Activated CD4-positive, alpha-beta T cell treated with anti-CD3 and anti-CD28 coated beads, Interleukin-2, amount 10 ng/mL, durations not matched to agents 24 days and 14 days (primary cell): ENCODE measurements at regions of chr2 and their contacts with region 1.

Region 1: DNA sequence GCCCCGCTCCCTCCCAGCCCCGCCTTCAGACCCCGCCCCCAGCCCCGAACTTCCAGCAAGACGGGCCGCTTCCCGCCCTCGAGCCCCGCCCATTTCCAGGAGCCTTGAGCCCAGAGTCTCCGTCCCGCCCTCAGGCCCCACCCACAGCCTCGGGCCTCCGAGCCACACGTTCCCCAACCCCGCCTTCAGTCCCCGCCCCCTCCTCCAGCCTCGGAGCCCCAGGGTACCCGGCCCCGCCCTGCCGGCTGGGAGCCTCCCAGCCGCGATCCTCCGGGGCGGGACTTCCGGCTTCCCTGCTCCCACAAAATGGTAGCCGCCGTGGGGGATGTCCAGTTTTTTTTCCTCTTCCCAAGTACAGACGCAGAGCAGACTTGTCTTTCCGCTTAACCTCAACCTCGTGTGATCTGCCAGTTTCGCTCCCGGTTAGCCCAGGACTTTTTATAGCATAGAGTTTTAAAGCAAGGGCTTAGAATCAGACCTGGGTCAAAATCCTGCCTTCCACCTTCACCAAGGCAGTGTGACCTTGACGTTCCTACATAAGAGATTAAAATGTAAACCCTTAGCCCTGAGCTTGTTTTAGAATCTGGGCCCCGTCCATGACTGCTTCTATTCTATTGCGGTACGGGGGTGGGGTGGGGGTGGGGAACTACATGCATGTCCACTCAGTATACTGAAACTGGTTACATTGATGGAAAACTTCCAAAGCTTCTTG is 435 bp upstream of the GPR155 start:
- DNase-seq: peak; percentile 96
- H3K4me3 Mint-ChIP-seq: peak overlapping the region; percentile 95
- H3K27ac Mint-ChIP-seq: peak overlapping the region; percentile 85
- H3K4me1 Mint-ChIP-seq: peaks cover 51% of the 10 kb centered on the region
- H3K27me3 Mint-ChIP-seq: no peaks in the 10 kb centered on the region

Region 2: DNA sequence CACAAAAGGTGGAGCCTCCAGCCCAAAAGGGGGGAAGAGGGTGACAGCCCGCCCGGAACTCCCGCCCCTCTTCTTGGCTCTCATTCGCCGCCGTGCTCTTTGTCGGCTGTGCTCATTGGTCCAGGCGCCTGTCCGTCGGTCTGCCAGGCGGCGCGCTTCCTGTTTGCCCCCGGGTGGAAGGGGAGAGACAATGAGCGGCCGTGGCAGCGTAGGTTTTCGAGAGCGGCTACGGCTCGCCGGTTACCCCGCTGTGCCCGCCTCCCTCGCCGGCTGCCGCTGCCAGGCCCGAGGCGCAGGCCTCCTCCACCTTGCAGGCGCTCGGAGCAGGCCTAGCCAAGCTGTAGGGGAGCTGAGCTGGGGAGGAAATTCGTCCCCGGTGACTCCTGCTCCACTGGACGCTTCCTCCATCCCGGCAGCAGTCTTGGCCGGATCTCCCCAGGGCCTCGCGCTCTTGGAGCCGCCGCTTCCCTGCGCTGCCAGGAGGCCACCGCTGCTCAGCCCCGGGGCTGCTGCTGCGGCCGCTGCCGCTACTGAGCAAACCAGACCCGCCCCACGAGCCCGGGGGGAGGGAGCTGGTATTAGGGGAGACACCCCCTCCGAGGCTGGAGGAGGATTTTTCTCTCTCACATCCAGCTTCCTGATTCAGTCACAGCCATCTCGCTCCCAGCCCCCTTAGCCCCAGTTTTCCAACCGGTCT is 521.8 kb before region 1 on chr2 and contains the start of gene SP3:
- intact Hi-C with region 1: loop called (anchors 10 kb)
- DNase-seq: peak; percentile 98
- H3K4me3 Mint-ChIP-seq: peak within 1 kb of the TSS; percentile 90
- H3K27ac Mint-ChIP-seq: peak within 1 kb of the TSS; percentile 100
- H3K4me1 Mint-ChIP-seq: peaks cover 24% of the 10 kb centered on the region
- H3K27me3 Mint-ChIP-seq: no peaks in the 10 kb centered on the region
- total RNA-seq, gene SP3: 99.9 and 104 TPM in 2 replicates

Region 3: DNA sequence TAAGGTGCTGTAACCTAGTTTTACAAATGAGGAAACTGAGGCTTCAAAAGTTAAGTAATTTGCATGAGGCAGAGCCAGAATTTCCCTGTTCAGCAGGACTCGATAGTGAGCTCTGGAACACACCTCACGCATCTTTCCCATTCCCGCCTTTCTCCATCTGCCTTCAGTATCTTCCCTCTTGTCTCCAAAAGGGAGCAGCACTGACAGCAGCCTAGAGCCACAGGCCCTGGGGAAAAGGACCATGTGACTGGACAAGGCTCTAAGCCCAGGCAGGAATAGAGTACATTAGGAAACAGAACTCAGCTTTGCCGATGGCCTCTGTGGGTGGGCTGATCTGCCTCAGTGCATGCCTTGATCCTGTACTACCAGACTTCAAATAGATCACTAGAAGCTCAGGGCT is 21.9 kb before region 1 on chr2:
- intact Hi-C with region 1: loop called (anchors 1 kb)
- DNase-seq: no peak
- H3K4me3 Mint-ChIP-seq: no peak overlapping the region
- H3K27ac Mint-ChIP-seq: no peak overlapping the region
- H3K4me1 Mint-ChIP-seq: no peaks in the 10 kb centered on the region
- H3K27me3 Mint-ChIP-seq: no peaks in the 10 kb centered on the region

Region 4: DNA sequence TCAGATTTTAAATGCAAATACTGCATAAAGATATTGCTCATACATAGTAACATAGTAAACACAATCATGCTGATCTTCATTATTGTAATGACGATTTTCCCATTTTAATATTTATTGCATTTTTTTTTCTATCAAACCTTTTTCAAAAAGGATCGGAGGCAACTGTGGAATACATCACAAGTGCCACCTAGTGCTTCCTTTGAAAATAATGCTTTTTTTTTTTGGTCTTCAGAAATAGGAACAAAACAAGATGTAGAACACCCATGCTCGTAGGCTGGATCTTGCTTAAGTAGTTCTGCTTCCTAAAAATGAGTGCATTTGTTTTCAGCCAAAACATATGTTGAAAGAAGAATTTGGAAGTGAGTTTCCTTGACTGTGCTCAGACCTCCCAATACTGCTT is 35.3 kb after region 1 on chr2:
- intact Hi-C with region 1: no loop called
- DNase-seq: no peak
- H3K4me3 Mint-ChIP-seq: no peak overlapping the region
- H3K27ac Mint-ChIP-seq: no peak overlapping the region
- H3K4me1 Mint-ChIP-seq: peaks cover 12% of the 10 kb centered on the region
- H3K27me3 Mint-ChIP-seq: peaks cover 14% of the 10 kb centered on the region

Region 5: DNA sequence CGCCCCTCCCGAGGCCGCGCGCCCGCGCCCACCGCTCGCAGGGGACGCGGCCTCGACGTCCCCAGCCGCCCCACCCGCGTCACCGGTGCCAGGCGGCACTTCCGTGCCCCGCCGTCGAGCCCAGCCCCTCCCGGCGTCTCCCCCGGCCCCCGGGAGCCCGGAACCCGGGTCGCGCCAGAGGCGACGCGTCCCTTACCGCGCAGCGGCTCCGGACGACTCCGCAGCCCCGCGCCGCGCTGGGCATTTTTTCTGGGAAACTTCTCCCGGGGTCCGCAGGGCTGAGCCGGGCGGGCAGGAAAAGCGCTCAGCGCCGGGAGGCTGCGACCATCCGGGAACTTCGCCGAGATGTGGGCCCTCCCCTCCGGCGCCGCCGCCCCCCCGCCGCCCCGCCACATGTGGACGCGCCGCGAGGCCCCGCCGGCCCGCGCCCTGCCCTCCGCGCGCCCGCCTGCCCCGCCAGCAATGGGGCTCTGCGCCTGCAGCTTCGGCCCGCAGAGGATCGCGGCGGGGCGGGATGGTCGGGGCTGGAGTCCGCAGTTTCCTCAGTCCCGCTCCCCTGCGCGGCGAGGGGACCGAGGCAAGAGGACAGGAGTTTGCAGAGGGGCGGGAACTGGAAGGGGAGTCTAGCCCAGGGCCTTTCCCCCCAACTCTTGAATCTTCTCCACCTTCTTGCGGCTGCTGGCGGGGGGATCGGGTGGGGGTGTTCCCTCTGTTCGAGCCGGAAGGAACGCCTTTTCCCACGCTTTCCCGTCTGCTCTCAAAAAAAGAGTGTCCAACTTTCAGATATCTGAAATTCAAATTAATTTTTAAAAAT is 195.5 kb after region 1 on chr2:
- intact Hi-C with region 1: loop called (anchors 2 kb)
- DNase-seq: peak; percentile 89
- H3K4me3 Mint-ChIP-seq: peak overlapping the region; percentile 92
- H3K27ac Mint-ChIP-seq: peak overlapping the region; percentile 97
- H3K4me1 Mint-ChIP-seq: peaks cover 50% of the 10 kb centered on the region
- H3K27me3 Mint-ChIP-seq: no peaks in the 10 kb centered on the region

Region 6: DNA sequence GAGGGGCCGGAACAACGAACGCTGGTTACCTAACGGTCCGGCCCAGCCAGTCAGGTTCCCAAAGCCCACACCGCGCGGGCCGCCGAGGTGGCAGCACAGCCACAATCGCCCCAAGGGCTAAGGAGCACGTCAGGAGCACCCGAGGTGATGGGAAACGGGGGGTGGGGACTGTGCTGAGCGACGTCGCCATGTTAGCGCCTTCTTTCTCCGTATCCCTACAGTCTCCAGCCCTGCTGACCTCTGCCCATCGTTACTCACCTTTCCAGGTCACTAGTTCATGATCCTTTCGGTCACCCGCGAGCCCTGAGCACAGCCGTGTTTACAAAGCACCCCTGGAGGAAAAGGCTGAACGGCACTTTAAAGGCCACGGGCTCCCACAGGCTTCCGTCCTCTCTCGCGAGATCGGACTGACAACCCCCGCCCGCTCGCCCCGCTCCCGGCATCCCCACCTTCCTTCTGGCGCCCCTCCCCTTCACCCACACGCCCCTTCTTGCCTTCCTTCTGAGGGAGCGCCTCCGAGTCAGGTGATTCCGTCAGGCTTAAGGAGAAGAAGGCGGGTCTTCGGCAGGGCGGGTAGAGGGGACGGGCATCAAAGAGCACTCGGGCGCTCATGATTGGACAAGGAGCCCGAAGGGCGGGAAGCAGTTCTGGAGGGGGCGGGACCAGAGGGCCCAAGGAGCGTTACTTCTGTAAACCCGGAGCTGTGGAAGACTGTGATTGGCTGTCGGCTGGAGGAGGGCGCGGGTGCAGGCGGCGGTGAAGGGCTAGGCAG is 680.7 kb after region 1 on chr2 and contains the start of gene ATF2:
- intact Hi-C with region 1: loop called (anchors 2 kb)
- DNase-seq: peak; percentile 99
- H3K4me3 Mint-ChIP-seq: peak within 1 kb of the TSS; percentile 100
- H3K27ac Mint-ChIP-seq: peak within 1 kb of the TSS; percentile 100
- H3K4me1 Mint-ChIP-seq: peaks cover 33% of the 10 kb centered on the region
- H3K27me3 Mint-ChIP-seq: no peaks in the 10 kb centered on the region
- total RNA-seq, gene ATF2: 58.8 and 60.2 TPM in 2 replicates